ENCODE measurements at regions of chr14 and their contacts with region 1.

Region 1: GRCh38 chr14:103520657-103521437 is 1.8 kb downstream of the CKB start:
- DNase-seq: peak in 1 of 2 donors; percentile 89
- H3K4me3 ChIP-seq: peak overlapping the region; percentile 73 to 75
- H3K27ac ChIP-seq: peak overlapping the region; percentile 79 to 82
- H3K4me1 ChIP-seq: peaks cover 25 to 32% of the 10 kb centered on the region in 2 donors
- H3K27me3 ChIP-seq: no peaks in the 10 kb centered on the region
- CTCF ChIP-seq: peak; percentile 51 to 70 (median 57)

Region 2: GRCh38 chr14:103540821-103541708 is 20.2 kb after region 1 on chr14:
- intact Hi-C with region 1: loop called (anchors 1 kb)
- DNase-seq: no peak
- H3K4me3 ChIP-seq: peak overlapping the region; percentile 2 to 11
- H3K27ac ChIP-seq: peak overlapping the region; percentile 66 to 88
- H3K4me1 ChIP-seq: peaks cover 57 to 60% of the 10 kb centered on the region in 2 donors
- H3K27me3 ChIP-seq: no peaks in the 10 kb centered on the region
- CTCF ChIP-seq: no peak

Region 3: GRCh38 chr14:103546652-103547454 is 26.0 kb after region 1 on chr14:
- intact Hi-C with region 1: loop called (anchors 1 kb)
- DNase-seq: no peak
- H3K4me3 ChIP-seq: no peak overlapping the region
- H3K27ac ChIP-seq: no peak overlapping the region
- H3K4me1 ChIP-seq: peaks cover 46 to 65% of the 10 kb centered on the region in 2 donors
- H3K27me3 ChIP-seq: no peaks in the 10 kb centered on the region
- CTCF ChIP-seq: peak; percentile 84 to 93 (median 86)

Region 4: DNA sequence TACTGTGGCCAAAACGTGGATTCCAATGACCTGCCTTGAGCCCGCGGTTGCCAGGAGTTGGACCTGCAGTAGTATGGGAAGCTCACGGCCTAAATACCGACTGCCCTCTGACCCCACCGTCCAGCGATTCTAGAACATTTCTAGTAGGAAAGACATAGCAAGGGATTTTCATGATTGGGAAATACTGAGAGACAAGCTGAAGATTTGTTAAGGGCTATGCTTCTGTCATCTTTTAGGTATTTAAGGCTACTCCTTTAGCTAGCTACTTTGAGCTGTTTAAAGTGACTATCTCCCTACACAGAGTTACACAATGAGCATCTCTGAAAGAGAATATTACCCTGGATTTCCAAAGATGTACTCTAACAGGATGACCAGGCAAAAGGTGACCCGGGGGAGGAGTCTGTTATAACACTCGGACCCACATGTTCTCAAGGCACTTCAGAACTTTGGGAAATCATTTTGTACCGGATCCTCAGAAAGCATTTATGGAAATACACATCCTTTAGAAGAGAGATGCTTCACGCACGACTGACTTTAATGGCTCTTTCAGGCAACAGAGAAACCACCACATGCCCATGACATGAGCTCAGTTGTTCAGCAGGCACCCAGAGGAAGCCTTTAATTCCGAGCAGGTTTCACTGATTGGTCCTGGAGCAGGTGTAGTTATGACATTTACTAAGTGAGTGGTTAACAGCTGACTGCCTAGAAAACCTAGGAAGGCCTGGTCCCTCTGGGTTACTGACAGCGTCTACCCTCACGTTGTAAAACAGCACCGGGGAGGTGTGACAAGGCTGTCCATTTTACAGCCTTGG is 37.4 kb after region 1 on chr14:
- intact Hi-C with region 1: no loop called
- DNase-seq: no peak
- H3K4me3 ChIP-seq: no peak overlapping the region
- H3K27ac ChIP-seq: peak overlapping the region in 1 of 2 donors; percentile 28
- H3K4me1 ChIP-seq: peaks cover 5 to 38% of the 10 kb centered on the region in 2 donors
- H3K27me3 ChIP-seq: no peaks in the 10 kb centered on the region
- CTCF ChIP-seq: no peak

Region 5: GRCh38 chr14:103628684-103629502 is 108.0 kb after region 1 on chr14 and contains the start of gene KLC1:
- intact Hi-C with region 1: loop called (anchors 5 kb)
- DNase-seq: peak in 1 of 2 donors; percentile 88
- H3K4me3 ChIP-seq: peak within 1 kb of the TSS; percentile 78 to 80
- H3K27ac ChIP-seq: peak within 1 kb of the TSS; percentile 96 to 99
- H3K4me1 ChIP-seq: peaks cover 20 to 33% of the 10 kb centered on the region in 2 donors
- H3K27me3 ChIP-seq: no peaks in the 10 kb centered on the region
- CTCF ChIP-seq: no peak
- total RNA-seq, gene KLC1: 302 TPM

Measured in ascending aorta (tissue), 2 donors.